ENCODE measurements at regions of chr7 and their contacts with region 1.

Region 1: GRCh38 chr7:155298834-155299534 is 1.3 kb downstream of the INSIG1 start:
- DNase-seq: peak; percentile 95 to 96
- ATAC-seq: peak; percentile 86 to 91 (median 88)
- H3K4me3 ChIP-seq: peak overlapping the region; percentile 78
- H3K27ac ChIP-seq: peak overlapping the region; percentile 90
- H3K4me1 ChIP-seq: peaks cover 14% of the 10 kb centered on the region
- H3K27me3 ChIP-seq: no peaks in the 10 kb centered on the region
- CTCF ChIP-seq: no peak

Region 2: GRCh38 chr7:155003376-155004214 is 295.4 kb before region 1 on chr7:
- intact Hi-C with region 1: loop called in 1 of 2 experiments (anchors 5 kb)
- DNase-seq: peak; percentile 84 to 93
- ATAC-seq: peak; percentile 96 to 98 (median 98)
- H3K4me3 ChIP-seq: peak overlapping the region; percentile 95
- H3K27ac ChIP-seq: peak overlapping the region; percentile 97
- H3K4me1 ChIP-seq: peaks cover 20% of the 10 kb centered on the region
- H3K27me3 ChIP-seq: no peaks in the 10 kb centered on the region
- CTCF ChIP-seq: no peak

Region 3: DNA sequence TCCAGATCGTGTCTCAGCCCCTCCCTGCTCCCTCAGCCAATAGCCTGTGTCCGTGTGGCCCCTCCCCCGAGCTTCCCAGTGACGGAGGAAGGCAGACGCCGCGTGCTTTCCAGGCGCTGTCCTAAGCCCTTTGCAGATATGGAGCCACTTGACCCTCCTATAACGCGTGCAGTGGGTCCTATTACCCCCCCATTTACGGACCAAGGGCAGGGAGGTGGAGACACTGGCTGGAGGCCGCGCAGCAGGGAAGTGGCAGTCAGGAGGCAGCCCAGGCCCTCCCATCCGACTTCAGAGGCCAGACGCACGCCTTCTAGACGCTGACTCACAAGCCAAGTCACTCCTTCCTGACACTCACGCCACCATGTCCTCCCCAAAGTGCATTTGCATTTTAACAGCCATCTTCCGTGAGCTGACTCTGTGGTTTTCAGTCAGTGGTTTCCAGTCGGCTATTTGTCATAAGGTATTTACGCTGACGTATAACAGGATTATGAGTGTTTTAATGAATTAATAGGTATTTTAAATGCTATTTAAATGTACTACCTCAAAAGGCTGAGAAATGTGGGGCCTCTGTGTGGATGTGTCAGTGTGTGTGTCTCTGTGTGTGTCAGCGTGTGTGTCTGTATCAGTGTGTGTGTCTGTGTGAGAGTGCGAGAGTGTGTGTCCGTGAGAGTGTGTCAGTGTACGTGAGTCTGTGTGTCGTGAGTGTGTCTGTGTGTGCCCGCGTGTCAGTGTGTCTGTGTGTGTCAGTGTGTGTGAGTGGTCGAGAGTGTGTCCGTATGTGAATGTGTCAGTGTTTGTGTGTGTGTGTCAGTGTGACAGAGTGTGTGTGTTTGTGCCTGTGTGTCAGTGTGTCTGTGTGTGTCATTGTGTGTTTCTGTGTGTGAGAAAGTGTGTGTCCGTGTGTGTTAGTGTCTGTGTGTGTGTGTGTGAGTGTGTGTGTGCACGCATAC is 93.3 kb before region 1 on chr7:
- intact Hi-C with region 1: loop called in 1 of 2 experiments (anchors 5 kb)
- DNase-seq: peak; percentile 89 to 94
- ATAC-seq: peak; percentile 79 to 90 (median 82)
- H3K4me3 ChIP-seq: peak overlapping the region; percentile 53
- H3K27ac ChIP-seq: peak overlapping the region; percentile 75
- H3K4me1 ChIP-seq: no peaks in the 10 kb centered on the region
- H3K27me3 ChIP-seq: peaks cover 0 to 2% (median 0%) of the 10 kb centered on the region in 3 donors
- CTCF ChIP-seq: no peak

Region 4: GRCh38 chr7:155257482-155258225 is 41.3 kb before region 1 on chr7:
- intact Hi-C with region 1: loop called in 1 of 2 experiments (anchors 2 kb)
- DNase-seq: peak; percentile 83 to 91
- ATAC-seq: peak; percentile 85 to 93 (median 88)
- H3K4me3 ChIP-seq: peak overlapping the region; percentile 47
- H3K27ac ChIP-seq: peak overlapping the region; percentile 91
- H3K4me1 ChIP-seq: peaks cover 21% of the 10 kb centered on the region
- H3K27me3 ChIP-seq: no peaks in the 10 kb centered on the region
- CTCF ChIP-seq: no peak

Region 5: DNA sequence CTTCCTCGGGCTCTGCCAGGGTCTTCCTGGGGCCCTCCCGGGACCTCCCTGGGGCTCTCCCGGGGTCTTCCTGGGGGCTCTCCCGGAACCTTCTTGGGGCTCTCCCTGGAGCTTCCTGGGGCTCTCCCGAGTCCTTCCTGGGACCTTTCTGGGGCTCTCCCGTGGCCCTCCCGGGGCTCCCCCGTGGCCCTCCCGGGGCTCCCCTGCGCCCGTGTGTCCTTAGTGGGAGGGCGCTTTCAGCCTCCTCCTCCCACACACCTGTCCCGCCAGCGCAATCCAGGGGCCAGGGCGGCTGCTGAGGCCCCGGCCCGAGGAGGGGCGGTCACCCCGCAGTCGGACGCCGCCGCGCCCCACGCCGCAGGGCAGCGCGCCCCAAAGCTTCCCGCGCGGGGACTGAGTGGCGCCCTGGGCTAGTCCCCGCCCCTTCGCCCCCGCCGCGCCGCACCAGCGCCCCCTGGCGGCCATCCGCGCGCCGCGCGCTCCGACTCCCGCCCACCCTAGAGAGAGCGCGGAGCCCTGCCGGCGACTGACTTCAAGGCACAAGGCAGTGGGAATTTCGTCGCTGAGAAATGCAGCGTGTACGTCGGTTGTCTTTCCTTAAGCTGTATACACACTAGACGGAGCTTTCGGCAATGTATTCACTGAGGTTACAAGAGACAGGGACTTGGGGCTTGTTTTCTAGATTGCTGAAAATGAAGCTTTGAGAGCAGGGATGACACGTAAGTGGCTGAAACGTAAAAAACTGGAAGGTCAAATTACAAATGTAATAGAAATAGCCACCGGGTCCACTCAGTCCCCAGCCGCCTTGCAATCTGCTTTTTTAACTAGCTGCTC is 45.8 kb after region 1 on chr7:
- intact Hi-C with region 1: loop called in 1 of 2 experiments (anchors 5 kb)
- DNase-seq: peak; percentile 75 to 86
- ATAC-seq: peak; percentile 95 to 99 (median 97)
- H3K4me3 ChIP-seq: peak overlapping the region; percentile 57
- H3K27ac ChIP-seq: no peak overlapping the region
- H3K4me1 ChIP-seq: peaks cover 3% of the 10 kb centered on the region
- H3K27me3 ChIP-seq: peaks cover 0 to 19% (median 6%) of the 10 kb centered on the region in 3 donors
- CTCF ChIP-seq: peak; percentile 95

Measured in psoas muscle (tissue), 8 donors.